AG04449 (cell line): ENCODE measurements at regions of chr17 and their contacts with region 1.

Region 1: GRCh38 chr17:16438557-16439302 is 23.4 kb downstream of the TRPV2 start:
- DNase-seq: peak; percentile 99
- H3K4me3 ChIP-seq: peak overlapping the region; percentile 96
- CTCF ChIP-seq: no peak

Region 2: GRCh38 chr17:16415031-16415924 is 23.5 kb before region 1 on chr17 and contains the start of gene TRPV2:
- CTCF ChIA-PET with region 1: interaction called, 5 read pairs
- POLR2A ChIA-PET with region 1: interaction called, 22 read pairs
- DNase-seq: no peak
- H3K4me3 ChIP-seq: peak within 1 kb of the TSS; percentile 64
- CTCF ChIP-seq: peak; percentile 22